ENCODE measurements at regions of chr1 and their contacts with region 1.

Region 1: GRCh38 chr1:204331274-204331673 is 28.5 kb downstream of the PLEKHA6 start:
- DNase-seq: peak; percentile 73
- ATAC-seq: peak; percentile 100
- H3K4me3 ChIP-seq: no peak overlapping the region
- H3K27ac ChIP-seq: peak overlapping the region; percentile 61
- H3K4me1 ChIP-seq: peaks cover 18% of the 10 kb centered on the region
- H3K27me3 ChIP-seq: no peaks in the 10 kb centered on the region
- CTCF ChIP-seq: no peak

Region 2: GRCh38 chr1:203692565-203693470 is 638.5 kb before region 1 on chr1:
- CTCF ChIA-PET with region 1: no interaction called
- POLR2A ChIA-PET with region 1: interaction called, 30 read pairs
- intact Hi-C with region 1: no loop called
- DNase-seq: peak; percentile 93
- ATAC-seq: peak; percentile 87
- H3K4me3 ChIP-seq: no peak overlapping the region; the same call in 1 of the 2 replicates
- H3K27ac ChIP-seq: peak overlapping the region; percentile 99
- H3K4me1 ChIP-seq: peaks cover 26% of the 10 kb centered on the region
- H3K27me3 ChIP-seq: no peaks in the 10 kb centered on the region
- CTCF ChIP-seq: no peak

Region 3: DNA sequence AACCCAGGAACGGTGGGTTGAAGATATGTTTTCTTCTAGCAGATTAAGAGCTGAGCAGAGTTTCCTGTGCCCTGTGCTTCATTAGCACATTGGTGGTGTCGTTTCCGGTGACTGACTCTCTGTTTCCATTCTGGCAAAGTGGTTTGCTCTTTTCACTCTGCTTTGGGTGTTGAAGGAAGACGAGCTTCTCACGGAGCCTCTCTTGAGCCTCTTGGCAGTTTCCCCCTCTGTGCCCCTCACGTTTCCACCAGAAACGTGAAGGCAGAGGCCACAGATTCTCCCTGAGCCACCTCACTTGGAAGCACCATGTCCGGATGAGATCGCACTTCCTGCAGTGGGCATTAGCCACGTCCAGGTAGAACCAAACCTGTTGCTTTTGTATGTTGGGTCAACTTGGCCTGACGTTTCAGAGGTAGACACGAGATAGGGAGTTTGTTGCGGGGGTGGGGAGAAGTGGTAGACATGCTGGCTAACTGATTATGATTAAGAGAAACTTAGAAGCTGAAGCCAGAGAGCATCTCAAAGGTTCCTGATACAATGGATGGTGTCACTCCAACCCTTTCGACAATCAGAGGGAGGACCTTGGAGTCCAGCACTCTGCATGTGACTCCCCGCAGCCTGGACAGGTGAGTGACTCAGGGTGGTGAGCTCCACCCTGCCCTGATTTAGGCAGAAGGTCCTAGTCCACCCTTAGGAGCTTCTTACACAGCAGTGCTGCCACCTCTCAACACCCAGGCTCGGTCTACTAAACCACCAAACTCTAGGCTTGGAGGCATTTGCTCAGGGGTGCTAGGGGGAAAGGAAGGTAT is 566.0 kb before region 1 on chr1 and contains the start of gene LAX1:
- CTCF ChIA-PET with region 1: no interaction called
- POLR2A ChIA-PET with region 1: no interaction called
- intact Hi-C with region 1: no loop called
- DNase-seq: no peak
- ATAC-seq: no peak
- H3K4me3 ChIP-seq: no peak within 1 kb of the TSS
- H3K27ac ChIP-seq: no peak within 1 kb of the TSS
- H3K4me1 ChIP-seq: no peaks in the 10 kb centered on the region
- H3K27me3 ChIP-seq: no peaks in the 10 kb centered on the region
- CTCF ChIP-seq: no peak
- total RNA-seq, gene LAX1: not detected in 2 replicates

Region 4: GRCh38 chr1:204198151-204198994 is 132.9 kb before region 1 on chr1:
- CTCF ChIA-PET with region 1: no interaction called
- POLR2A ChIA-PET with region 1: interaction called, 12 read pairs
- intact Hi-C with region 1: no loop called
- DNase-seq: peak; percentile 98
- ATAC-seq: peak; percentile 95
- H3K4me3 ChIP-seq: no peak overlapping the region
- H3K27ac ChIP-seq: peak overlapping the region; percentile 73
- H3K4me1 ChIP-seq: peaks cover 32% of the 10 kb centered on the region
- H3K27me3 ChIP-seq: no peaks in the 10 kb centered on the region
- CTCF ChIP-seq: peak; percentile 74

Region 5: GRCh38 chr1:204241050-204241449 is 90.2 kb before region 1 on chr1:
- CTCF ChIA-PET with region 1: no interaction called
- POLR2A ChIA-PET with region 1: no interaction called
- intact Hi-C with region 1: no loop called
- DNase-seq: no peak
- ATAC-seq: no peak
- H3K4me3 ChIP-seq: no peak overlapping the region
- H3K27ac ChIP-seq: no peak overlapping the region
- H3K4me1 ChIP-seq: no peaks in the 10 kb centered on the region
- H3K27me3 ChIP-seq: no peaks in the 10 kb centered on the region
- CTCF ChIP-seq: no peak

Region 6: GRCh38 chr1:204319491-204319907 is 11.8 kb before region 1 on chr1:
- CTCF ChIA-PET with region 1: no interaction called
- POLR2A ChIA-PET with region 1: interaction called, 28 read pairs
- intact Hi-C with region 1: no loop called
- DNase-seq: peak; percentile 99
- ATAC-seq: peak; percentile 90
- H3K4me3 ChIP-seq: peak overlapping the region; percentile 28
- H3K27ac ChIP-seq: peak overlapping the region; percentile 90
- H3K4me1 ChIP-seq: peaks cover 49% of the 10 kb centered on the region
- H3K27me3 ChIP-seq: no peaks in the 10 kb centered on the region
- CTCF ChIP-seq: no peak

Measured in PC-3 (cell line).